Astrocyte of the cerebellum (primary cell): ENCODE measurements at regions of chr3 and their contacts with region 1.

Region 1: DNA sequence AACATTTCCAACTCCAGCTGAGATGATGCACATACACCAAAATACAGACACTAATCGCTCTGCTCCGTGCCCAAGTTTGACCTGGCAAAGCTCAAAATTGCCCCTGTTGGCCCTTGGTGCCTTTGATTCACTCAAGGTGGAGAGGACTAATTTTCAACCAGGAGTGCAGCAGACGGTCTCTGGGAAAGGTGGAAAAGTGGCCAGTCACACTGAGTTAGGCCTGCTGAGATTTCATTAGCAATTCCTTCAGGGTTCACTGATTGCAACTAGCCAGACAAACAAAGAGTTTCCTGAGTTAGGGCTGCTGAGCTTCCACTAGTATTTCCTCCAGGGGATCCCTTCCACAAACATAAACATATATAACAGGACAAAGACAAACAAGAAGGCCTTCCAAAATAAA is 28.7 kb upstream of the LHFPL4 start:
- DNase-seq: no peak
- H3K4me3 ChIP-seq: no peak overlapping the region
- CTCF ChIP-seq: no peak

Region 2: GRCh38 chr3:9525078-9525477 is 57.3 kb before region 1 on chr3:
- in situ Hi-C with region 1: loop called (anchors 10 kb)
- DNase-seq: no peak
- H3K4me3 ChIP-seq: no peak overlapping the region
- CTCF ChIP-seq: no peak